Aorta (tissue), 5 donors: ENCODE measurements at regions of chr10 and their contacts with region 1.

Region 1: GRCh38 chr10:14604181-14605142 is 170.2 kb downstream of the FAM107B start:
- DNase-seq: peak; percentile 87 to 94
- ATAC-seq: peak; percentile 96
- H3K4me3 ChIP-seq: peak overlapping the region; percentile 92 to 99
- H3K27ac ChIP-seq: peak overlapping the region; percentile 69 to 77
- H3K4me1 ChIP-seq: no peaks in the 10 kb centered on the region
- H3K27me3 ChIP-seq: no peaks in the 10 kb centered on the region

Region 2: GRCh38 chr10:14536241-14537213 is 67.9 kb before region 1 on chr10:
- intact Hi-C with region 1: loop called in 1 of 2 experiments (anchors 5 kb)
- DNase-seq: peak; percentile 80 to 82
- ATAC-seq: peak; percentile 64
- H3K4me3 ChIP-seq: no peak overlapping the region
- H3K27ac ChIP-seq: peak overlapping the region in 1 of 2 donors; percentile 76
- H3K4me1 ChIP-seq: no peaks in the 10 kb centered on the region
- H3K27me3 ChIP-seq: no peaks in the 10 kb centered on the region

Region 3: GRCh38 chr10:14648005-14648765 is 43.7 kb after region 1 on chr10:
- intact Hi-C with region 1: loop called in 1 of 2 experiments (anchors 2 kb)
- DNase-seq: peak in 1 of 2 donors; percentile 83
- ATAC-seq: peak; percentile 93
- H3K4me3 ChIP-seq: no peak overlapping the region
- H3K27ac ChIP-seq: peak overlapping the region; percentile 60 to 96
- H3K4me1 ChIP-seq: peaks cover 0 to 2% of the 10 kb centered on the region in 2 donors
- H3K27me3 ChIP-seq: no peaks in the 10 kb centered on the region

Region 4: DNA sequence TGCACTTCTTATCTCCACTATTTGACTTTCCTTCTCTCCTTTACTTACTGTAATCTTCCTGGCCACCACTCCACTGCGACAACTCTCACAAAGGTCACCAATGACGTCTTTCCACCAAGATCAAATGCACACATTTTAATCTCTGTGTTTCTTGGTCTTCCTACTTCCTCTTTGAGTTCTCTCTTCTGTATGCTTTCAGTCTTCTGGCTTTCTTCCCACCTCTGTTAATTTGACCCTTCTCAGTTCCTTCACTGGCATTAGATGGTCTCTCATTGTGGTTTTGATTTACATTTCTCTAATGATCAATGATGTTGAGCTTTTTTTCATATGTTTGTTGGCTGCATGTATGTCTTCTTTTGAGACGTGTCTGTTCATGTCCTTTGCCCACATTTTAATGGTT is 138.4 kb after region 1 on chr10:
- intact Hi-C with region 1: loop called in 1 of 2 experiments (anchors 5 kb)
- DNase-seq: no peak
- ATAC-seq: no peak
- H3K4me3 ChIP-seq: no peak overlapping the region
- H3K27ac ChIP-seq: no peak overlapping the region
- H3K4me1 ChIP-seq: no peaks in the 10 kb centered on the region
- H3K27me3 ChIP-seq: no peaks in the 10 kb centered on the region

Region 5: GRCh38 chr10:14837757-14838581 is 233.5 kb after region 1 on chr10 and contains the starts of genes CDNF, HSPA14 and MSANTD7:
- intact Hi-C with region 1: loop called in 1 of 2 experiments (anchors 5 kb)
- DNase-seq: peak; percentile 99 to 100
- ATAC-seq: peak; percentile 99
- H3K4me3 ChIP-seq: peak within 1 kb of the TSS; percentile 81 to 93
- H3K27ac ChIP-seq: peak within 1 kb of the TSS; percentile 67 to 92
- H3K4me1 ChIP-seq: no peaks in the 10 kb centered on the region
- H3K27me3 ChIP-seq: no peaks in the 10 kb centered on the region
- total RNA-seq, gene CDNF: 1.9 TPM
- total RNA-seq, gene HSPA14: 11.5 TPM
- total RNA-seq, gene MSANTD7: 7.0 to 8.2 TPM